Activated CD4-positive, alpha-beta T cell treated with anti-CD3 and anti-CD28 coated beads for 36 hours (primary cell): ENCODE measurements at regions of chr17 and their contacts with region 1.

Region 1: DNA sequence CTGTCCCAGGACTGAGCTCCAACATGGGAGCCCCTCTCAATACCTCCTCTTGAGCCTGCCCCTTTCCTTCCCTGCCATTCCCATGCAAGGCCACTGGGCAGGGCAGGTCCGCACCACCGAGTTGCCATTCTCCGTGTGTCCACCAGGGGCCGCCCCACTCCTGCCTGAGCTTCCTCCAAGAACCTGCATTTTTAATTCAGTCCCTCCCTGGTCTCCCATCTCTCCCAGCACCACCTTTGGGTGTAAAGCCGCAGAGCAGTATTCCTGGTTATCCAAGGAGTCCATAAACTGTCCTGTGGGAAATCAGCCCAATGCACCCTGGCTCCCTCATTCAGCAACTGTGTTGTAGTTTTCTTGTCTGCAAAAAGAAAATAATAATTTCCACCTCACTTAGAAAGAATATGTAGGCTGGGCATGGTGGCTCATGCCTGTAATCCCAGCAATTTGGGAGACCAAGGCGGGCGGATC is 15.9 kb upstream of the ANKRD40CL start:
- DNase-seq: peak; percentile 90
- ATAC-seq: peak; percentile 89
- H3K4me3 Mint-ChIP-seq: no peak overlapping the region
- H3K27ac Mint-ChIP-seq: no peak overlapping the region
- H3K4me1 Mint-ChIP-seq: peaks cover 22% of the 10 kb centered on the region
- H3K27me3 Mint-ChIP-seq: peaks cover 11% of the 10 kb centered on the region

Region 2: DNA sequence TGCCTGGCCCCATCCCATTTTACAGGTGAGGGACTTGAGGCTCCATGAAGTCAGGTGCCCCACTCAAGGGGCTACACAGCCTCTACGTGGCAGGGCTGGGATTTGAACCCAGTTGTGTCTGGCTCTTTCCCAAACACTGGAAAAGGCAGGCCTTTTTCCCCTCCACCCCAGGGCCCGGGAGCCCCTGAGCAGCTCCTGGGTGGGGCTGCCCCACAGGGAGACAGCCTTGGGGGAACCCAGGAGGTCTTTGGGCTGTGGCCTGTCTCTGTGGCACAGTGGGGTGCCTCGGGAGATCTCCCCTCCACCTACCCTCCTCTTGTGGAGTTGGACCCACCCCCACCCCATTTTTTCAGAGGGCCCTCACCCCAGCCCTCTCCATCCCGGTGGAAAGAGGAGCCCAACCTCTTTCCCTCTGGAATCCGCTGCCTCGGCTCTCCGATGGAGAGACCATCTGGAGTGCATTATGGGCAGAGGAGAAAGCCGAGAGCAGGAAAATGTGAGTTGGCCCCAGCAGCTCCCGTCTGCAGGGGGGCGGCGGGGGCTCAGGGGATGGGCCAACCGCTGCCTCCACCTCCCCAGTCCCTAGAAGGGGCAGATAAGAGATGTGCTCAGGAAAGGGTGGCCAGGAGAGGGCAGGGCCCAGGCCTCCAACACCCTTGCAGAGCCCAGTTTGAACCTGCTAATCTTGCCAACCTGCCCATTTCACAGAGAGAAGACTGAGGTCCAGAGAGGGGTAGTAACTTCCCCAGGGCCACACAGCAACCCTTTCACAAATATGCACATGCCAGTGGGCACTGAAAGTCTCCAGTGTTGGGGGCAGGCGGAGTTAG is 524.4 kb before region 1 on chr17:
- CTCF ChIA-PET with region 1: no interaction called
- POLR2A ChIA-PET with region 1: no interaction called
- intact Hi-C with region 1: no loop called
- DNase-seq: no peak
- ATAC-seq: no peak
- H3K4me3 Mint-ChIP-seq: no peak overlapping the region
- H3K27ac Mint-ChIP-seq: no peak overlapping the region
- H3K4me1 Mint-ChIP-seq: no peaks in the 10 kb centered on the region
- H3K27me3 Mint-ChIP-seq: peaks cover 7% of the 10 kb centered on the region

Region 3: DNA sequence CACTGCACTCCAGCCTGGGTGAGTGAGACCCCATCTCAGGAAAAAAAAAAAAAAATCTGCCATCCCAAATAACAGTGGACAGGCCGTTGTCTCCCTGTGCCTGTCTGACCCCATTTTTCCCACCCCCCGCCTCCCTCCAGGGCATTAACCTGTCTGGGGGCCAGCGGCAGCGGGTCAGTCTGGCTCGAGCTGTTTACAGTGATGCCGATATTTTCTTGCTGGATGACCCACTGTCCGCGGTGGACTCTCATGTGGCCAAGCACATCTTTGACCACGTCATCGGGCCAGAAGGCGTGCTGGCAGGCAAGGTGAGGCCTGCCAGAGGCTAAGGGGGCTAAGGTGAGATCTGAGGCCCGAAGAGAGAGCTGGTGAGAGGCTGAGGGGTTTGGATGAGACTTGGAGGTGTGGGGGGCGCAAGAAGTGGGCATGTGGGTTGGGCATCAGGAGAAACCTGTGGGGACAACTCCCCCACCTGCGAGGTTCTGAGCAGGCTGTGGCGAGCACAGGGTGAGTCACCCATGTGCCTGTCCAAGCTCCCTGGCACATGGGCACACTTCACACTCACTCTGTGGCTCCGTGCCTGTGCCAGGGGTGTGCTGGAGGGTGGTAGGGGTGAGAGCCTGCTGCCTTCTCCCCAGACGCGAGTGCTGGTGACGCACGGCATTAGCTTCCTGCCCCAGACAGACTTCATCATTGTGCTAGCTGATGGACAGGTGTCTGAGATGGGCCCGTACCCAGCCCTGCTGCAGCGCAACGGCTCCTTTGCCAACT is 110.2 kb before region 1 on chr17:
- CTCF ChIA-PET with region 1: no interaction called
- POLR2A ChIA-PET with region 1: no interaction called
- intact Hi-C with region 1: no loop called
- DNase-seq: no peak
- ATAC-seq: no peak
- H3K4me3 Mint-ChIP-seq: no peak overlapping the region
- H3K27ac Mint-ChIP-seq: no peak overlapping the region
- H3K4me1 Mint-ChIP-seq: no peaks in the 10 kb centered on the region
- H3K27me3 Mint-ChIP-seq: peaks cover 3% of the 10 kb centered on the region

Region 4: DNA sequence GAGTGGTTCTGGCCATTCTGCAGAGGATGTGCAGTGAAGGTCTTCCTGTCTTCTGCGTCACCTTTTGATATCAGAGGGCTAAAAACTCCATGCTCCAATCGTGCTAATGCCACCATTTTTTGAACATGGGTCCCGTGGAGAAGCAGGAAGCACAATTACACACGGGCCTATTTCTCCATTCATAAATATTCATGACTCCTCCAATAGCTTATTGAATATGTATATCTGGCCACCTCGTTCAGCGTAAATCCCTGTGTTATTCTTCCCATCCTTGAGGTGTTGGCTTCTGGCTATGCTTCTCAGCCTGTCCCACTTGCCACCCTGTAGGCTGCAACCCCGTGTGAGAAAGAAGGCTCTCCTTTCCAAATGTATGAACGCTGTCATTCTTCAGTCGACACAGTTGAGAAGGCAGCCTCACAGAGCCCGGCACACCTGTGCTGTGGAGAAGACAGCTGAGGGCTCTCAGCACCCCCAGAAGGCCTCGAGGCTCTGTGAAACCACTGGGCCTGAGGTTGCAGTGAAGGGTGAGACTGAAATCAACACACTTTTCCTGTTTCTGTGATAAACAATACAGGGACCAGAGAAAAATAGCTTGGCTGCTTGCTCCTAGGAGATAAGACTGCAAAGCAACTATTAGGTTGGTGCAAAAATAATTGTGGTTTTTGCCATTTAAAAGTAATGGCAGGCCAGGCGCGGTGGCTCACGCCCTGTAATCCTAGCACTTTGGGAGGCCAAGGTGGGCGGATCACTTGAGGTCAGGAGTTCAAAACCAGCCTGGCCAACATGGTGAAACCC is 11.0 kb before region 1 on chr17:
- CTCF ChIA-PET with region 1: interaction called, 10 read pairs
- POLR2A ChIA-PET with region 1: interaction called, 3 read pairs
- intact Hi-C with region 1: no loop called
- DNase-seq: no peak
- ATAC-seq: no peak
- H3K4me3 Mint-ChIP-seq: no peak overlapping the region
- H3K27ac Mint-ChIP-seq: no peak overlapping the region
- H3K4me1 Mint-ChIP-seq: peaks cover 3% of the 10 kb centered on the region
- H3K27me3 Mint-ChIP-seq: peaks cover 1% of the 10 kb centered on the region

Region 5: DNA sequence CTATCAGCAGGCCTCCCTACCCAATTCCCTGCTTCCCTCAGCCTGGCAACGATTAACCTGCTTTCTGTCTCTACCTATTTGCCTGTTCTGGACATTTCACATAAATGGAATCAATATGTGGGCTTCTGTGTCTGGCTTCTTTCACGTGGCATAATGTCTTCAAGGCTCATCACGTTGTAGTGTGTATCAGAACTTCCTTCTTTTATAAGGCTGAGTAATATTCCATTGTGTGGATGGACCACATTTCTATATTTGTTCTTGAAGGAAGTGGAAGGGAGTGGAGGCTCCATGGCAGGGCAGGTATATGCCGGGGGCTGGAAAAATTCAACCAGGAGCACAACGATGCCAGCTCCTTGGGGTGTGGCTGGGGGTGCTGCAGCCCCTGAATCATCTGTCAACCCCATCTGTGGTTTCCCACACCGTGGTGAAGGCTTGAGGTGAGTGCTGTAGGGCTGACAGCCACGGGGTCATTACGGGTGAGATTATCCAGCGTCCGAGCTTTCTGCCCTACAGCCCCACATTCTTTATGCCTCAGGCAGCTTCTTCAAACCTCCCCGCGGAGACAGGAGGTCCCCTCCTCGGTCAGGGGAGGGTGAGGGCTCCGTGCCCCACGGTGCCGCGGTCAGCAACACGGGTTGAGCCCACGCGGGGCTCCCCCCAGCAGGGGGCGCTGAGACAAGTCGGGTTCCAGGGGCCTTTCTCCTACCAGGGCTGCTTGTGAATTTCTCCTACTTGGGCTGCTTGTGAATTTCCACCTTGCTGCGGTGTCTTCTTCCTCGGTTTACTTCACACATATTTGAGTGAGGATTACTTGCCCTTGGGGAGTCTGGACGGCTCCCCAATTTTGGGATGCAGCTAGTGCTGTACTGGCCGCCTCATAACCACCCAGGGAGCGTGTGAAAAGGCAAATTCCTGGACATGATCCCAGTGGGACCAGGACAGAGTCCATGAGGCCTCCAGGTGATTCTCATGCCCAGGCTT is 33.8 kb after region 1 on chr17:
- CTCF ChIA-PET with region 1: interaction called, 11 read pairs
- POLR2A ChIA-PET with region 1: no interaction called
- intact Hi-C with region 1: no loop called
- DNase-seq: peak; percentile 73
- ATAC-seq: peak; percentile 71
- H3K4me3 Mint-ChIP-seq: no peak overlapping the region
- H3K27ac Mint-ChIP-seq: no peak overlapping the region
- H3K4me1 Mint-ChIP-seq: no peaks in the 10 kb centered on the region
- H3K27me3 Mint-ChIP-seq: peaks cover 10% of the 10 kb centered on the region

Region 6: DNA sequence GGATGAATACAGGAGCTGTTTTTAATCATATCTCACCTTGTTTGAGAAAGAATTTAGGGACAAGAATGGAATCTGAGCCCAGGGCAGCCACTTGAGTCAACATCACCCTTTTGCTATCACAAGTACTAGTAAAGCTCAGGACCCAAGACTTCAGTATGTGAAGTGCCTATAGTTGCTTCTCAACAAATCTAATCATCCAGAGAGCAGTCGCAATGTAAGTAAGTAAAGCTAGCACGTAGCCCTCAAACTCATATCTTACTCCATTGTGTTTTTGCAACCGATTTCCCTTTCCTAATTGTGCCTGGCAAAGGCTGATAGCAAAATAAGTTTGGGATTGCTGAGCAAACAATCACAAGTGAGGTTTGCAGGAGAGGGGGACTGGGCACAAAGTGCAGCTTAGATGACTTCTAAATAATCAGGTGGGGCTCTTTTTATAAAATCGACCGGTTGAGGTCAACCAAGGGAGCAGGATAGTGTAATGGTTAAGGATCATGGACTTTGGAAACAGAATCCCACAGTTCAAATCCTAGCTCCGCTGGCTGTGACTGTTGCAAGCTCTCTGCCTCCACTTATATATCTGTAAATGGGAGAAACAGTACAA is 69.9 kb after region 1 on chr17:
- CTCF ChIA-PET with region 1: interaction called, 43 read pairs
- POLR2A ChIA-PET with region 1: no interaction called
- intact Hi-C with region 1: no loop called
- DNase-seq: no peak
- ATAC-seq: no peak
- H3K4me3 Mint-ChIP-seq: no peak overlapping the region
- H3K27ac Mint-ChIP-seq: peak overlapping the region; percentile 78
- H3K4me1 Mint-ChIP-seq: peaks cover 13% of the 10 kb centered on the region
- H3K27me3 Mint-ChIP-seq: no peaks in the 10 kb centered on the region